Kidney (tissue), 22 donors: ENCODE measurements at regions of chr12 and their contacts with region 1.

Region 1: GRCh38 chr12:9707864-9708808 is 24.8 kb downstream of the CLECL1 start:
- DNase-seq: peak in 4 of 5 donors; percentile 33 to 59 (median 46)
- H3K4me3 ChIP-seq: no peak overlapping the region
- H3K27ac ChIP-seq: no peak overlapping the region
- H3K4me1 ChIP-seq: no peaks in the 10 kb centered on the region
- H3K27me3 ChIP-seq: no peaks in the 10 kb centered on the region
- CTCF ChIP-seq: peak; percentile 78

Region 2: DNA sequence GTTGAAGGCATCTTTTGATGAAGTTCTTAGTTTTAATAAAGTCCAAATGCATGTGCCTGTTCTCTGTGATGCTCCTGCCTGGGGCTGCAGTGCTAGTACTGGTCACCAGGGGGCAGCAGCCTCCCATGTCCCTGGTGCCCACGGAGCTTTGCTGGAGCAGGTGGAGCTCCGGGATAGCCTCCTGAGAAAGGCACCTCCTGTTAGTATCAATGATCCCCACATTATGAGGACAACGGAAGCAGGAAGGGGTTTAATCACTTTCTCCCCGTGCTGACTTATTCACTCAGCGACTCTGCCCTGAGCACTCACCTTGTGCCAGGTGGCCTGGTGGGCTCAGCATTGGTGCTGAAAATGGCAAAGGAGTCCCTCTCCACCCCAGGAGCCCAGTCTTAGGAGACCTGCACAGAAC is 376.9 kb before region 1 on chr12:
- intact Hi-C with region 1: loop called (anchors 10 kb)
- DNase-seq: peak; percentile 57 to 86 (median 71)
- H3K4me3 ChIP-seq: no peak overlapping the region
- H3K27ac ChIP-seq: no peak overlapping the region
- H3K4me1 ChIP-seq: no peaks in the 10 kb centered on the region
- H3K27me3 ChIP-seq: no peaks in the 10 kb centered on the region
- CTCF ChIP-seq: peak; percentile 91

Region 3: GRCh38 chr12:9634177-9634803 is 73.8 kb before region 1 on chr12:
- intact Hi-C with region 1: loop called (anchors 5 kb)
- DNase-seq: peak in 3 of 5 donors; percentile 25 to 54 (median 45)
- H3K4me3 ChIP-seq: no peak overlapping the region
- H3K27ac ChIP-seq: no peak overlapping the region
- H3K4me1 ChIP-seq: no peaks in the 10 kb centered on the region
- H3K27me3 ChIP-seq: no peaks in the 10 kb centered on the region
- CTCF ChIP-seq: peak; percentile 64